PC-3 (cell line): ENCODE measurements at regions of chr4 and their contacts with region 1.

Region 1: DNA sequence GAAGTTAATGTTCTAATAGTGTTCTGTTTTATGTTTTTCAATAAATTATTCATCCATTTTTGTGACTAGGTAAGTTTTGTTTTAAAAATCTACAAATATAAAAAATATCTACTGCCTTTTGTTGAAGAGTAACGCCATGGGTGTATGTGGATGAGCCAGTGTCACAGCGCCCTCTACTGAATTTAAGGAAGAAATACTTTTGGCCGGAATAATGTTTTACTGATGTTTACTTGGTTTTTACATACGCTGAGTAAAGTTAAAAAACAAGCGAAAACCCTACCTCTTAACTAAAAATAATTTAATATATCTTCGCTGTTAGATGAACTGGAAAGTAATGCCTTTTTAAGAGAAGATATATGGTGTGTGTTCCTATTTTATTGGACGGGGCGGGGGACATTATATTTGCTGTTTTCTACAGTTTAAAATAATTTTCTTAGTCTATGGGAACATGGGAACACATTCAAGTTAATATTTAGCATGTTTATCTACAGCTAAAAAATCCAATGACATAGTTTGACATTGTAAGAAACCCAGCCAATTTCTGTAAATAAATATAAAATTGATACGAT is 86.1 kb downstream of the CPE start:
- DNase-seq: peak; percentile 51
- ATAC-seq: peak; percentile 54
- H3K4me3 ChIP-seq: peak overlapping the region; percentile 53; the same call in 1 of the 2 replicates
- H3K27ac ChIP-seq: no peak overlapping the region
- H3K4me1 ChIP-seq: no peaks in the 10 kb centered on the region
- H3K27me3 ChIP-seq: no peaks in the 10 kb centered on the region
- CTCF ChIP-seq: peak; percentile 75

Region 2: DNA sequence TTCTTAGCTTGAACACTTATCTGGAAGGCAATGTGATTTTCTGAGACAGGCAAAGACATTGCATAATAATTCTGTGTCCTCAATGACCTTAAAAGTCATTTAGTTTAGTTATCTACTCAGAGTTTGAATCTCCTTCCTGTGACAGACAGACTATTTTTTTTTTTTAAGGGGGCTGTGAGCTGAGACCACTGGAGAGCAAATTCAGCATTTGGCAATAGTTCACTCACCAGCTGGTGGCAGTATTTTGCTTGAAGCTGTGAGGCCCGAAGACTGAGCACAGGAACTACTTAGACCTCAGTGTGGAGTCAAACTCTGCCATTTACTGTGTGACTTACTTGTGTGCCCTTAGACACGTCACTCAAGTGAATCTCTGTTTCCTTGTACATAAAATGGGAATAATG is 109.0 kb before region 1 on chr4:
- CTCF ChIA-PET with region 1: interaction called, 3 read pairs
- POLR2A ChIA-PET with region 1: no interaction called
- intact Hi-C with region 1: loop called (anchors 1 kb)
- DNase-seq: peak; percentile 54
- ATAC-seq: peak; percentile 73
- H3K4me3 ChIP-seq: no peak overlapping the region
- H3K27ac ChIP-seq: no peak overlapping the region
- H3K4me1 ChIP-seq: no peaks in the 10 kb centered on the region
- H3K27me3 ChIP-seq: no peaks in the 10 kb centered on the region
- CTCF ChIP-seq: peak; percentile 73

Region 3: GRCh38 chr4:166602068-166602467 is 1137.2 kb after region 1 on chr4:
- CTCF ChIA-PET with region 1: no interaction called
- POLR2A ChIA-PET with region 1: no interaction called
- intact Hi-C with region 1: no loop called
- DNase-seq: no peak
- ATAC-seq: no peak
- H3K4me3 ChIP-seq: no peak overlapping the region
- H3K27ac ChIP-seq: no peak overlapping the region
- H3K4me1 ChIP-seq: no peaks in the 10 kb centered on the region
- H3K27me3 ChIP-seq: no peaks in the 10 kb centered on the region
- CTCF ChIP-seq: no peak